GM12878 (cell line): ENCODE measurements at regions of chr4 and their contacts with region 1.

Region 1: GRCh38 chr4:59161249-59161648 is 2038.9 kb upstream of the ADGRL3 start:
- DNase-seq: no peak
- ATAC-seq: peak; percentile 64
- H3K4me3 ChIP-seq: no peak overlapping the region
- H3K27ac ChIP-seq: no peak overlapping the region
- H3K4me1 ChIP-seq: no peaks in the 10 kb centered on the region
- H3K27me3 ChIP-seq: no peaks in the 10 kb centered on the region
- CTCF ChIP-seq: peak; percentile 27 to 42 (median 33); a peak in 3 of 6 replicates
- EP300 ChIP-seq: no peak
- POLR2A ChIP-seq: no peak
- RAD21 ChIP-seq: peak; percentile 47

Region 2: GRCh38 chr4:57426779-57427395 is 1734.4 kb before region 1 on chr4:
- CTCF ChIA-PET with region 1: interaction called, 3 read pairs
- POLR2A ChIA-PET with region 1: no interaction called
- RAD21 ChIA-PET with region 1: no interaction called
- SMC1A ChIA-PET with region 1: no interaction called
- in situ Hi-C with region 1: loop called (anchors 25 kb)
- intact Hi-C with region 1: no loop called
- DNase-seq: no peak
- ATAC-seq: peak; percentile 96
- H3K4me3 ChIP-seq: no peak overlapping the region
- H3K27ac ChIP-seq: no peak overlapping the region
- H3K4me1 ChIP-seq: no peaks in the 10 kb centered on the region
- H3K27me3 ChIP-seq: no peaks in the 10 kb centered on the region
- CTCF ChIP-seq: peak; percentile 74 to 85 (median 74)
- EP300 ChIP-seq: no peak
- POLR2A ChIP-seq: no peak
- RAD21 ChIP-seq: peak; percentile 77

Region 3: GRCh38 chr4:57442831-57443291 is 1718.4 kb before region 1 on chr4:
- CTCF ChIA-PET with region 1: no interaction called
- POLR2A ChIA-PET with region 1: no interaction called
- RAD21 ChIA-PET with region 1: no interaction called
- SMC1A ChIA-PET with region 1: no interaction called
- in situ Hi-C with region 1: loop called (anchors 25 kb)
- intact Hi-C with region 1: loop called (anchors 5 kb)
- DNase-seq: no peak
- ATAC-seq: peak; percentile 58
- H3K4me3 ChIP-seq: no peak overlapping the region
- H3K27ac ChIP-seq: no peak overlapping the region
- H3K4me1 ChIP-seq: no peaks in the 10 kb centered on the region
- H3K27me3 ChIP-seq: no peaks in the 10 kb centered on the region
- CTCF ChIP-seq: peak; percentile 62 to 68 (median 67)
- EP300 ChIP-seq: no peak
- POLR2A ChIP-seq: no peak
- RAD21 ChIP-seq: peak; percentile 78

Region 4: GRCh38 chr4:58732973-58733372 is 428.3 kb before region 1 on chr4:
- CTCF ChIA-PET with region 1: no interaction called
- POLR2A ChIA-PET with region 1: no interaction called
- RAD21 ChIA-PET with region 1: interaction called, 3 read pairs
- SMC1A ChIA-PET with region 1: no interaction called
- in situ Hi-C with region 1: no loop called
- intact Hi-C with region 1: loop called (anchors 1 kb)
- DNase-seq: no peak
- ATAC-seq: peak; percentile 73
- H3K4me3 ChIP-seq: no peak overlapping the region
- H3K27ac ChIP-seq: no peak overlapping the region
- H3K4me1 ChIP-seq: no peaks in the 10 kb centered on the region
- H3K27me3 ChIP-seq: no peaks in the 10 kb centered on the region
- CTCF ChIP-seq: peak in 1 of 3 experiments; percentile 31; a peak in 1 of 6 replicates
- EP300 ChIP-seq: no peak
- POLR2A ChIP-seq: no peak
- RAD21 ChIP-seq: peak; percentile 38

Region 5: DNA sequence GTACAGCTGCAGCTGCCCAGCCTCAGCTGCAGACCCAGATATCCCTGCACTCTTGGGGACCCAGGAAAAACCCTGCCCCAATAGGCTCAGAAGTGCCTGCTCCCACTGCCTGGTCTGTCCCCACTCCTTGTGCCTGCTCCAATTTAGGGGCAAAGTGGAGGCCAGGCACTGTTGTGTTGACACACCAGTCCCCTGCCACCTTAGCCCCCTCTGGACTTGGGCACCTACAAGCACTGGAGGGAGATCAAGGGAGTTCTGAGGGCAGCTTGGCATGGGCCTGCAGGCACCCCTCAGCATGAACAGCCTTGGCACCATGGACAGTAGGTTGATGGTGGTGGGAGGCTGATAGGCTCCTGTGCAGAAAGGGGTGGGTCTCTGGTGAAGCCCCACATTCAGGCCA is 18.1 kb after region 1 on chr4:
- CTCF ChIA-PET with region 1: no interaction called
- POLR2A ChIA-PET with region 1: no interaction called
- RAD21 ChIA-PET with region 1: no interaction called
- SMC1A ChIA-PET with region 1: no interaction called
- in situ Hi-C with region 1: no loop called
- intact Hi-C with region 1: no loop called
- DNase-seq: no peak
- ATAC-seq: no peak
- H3K4me3 ChIP-seq: no peak overlapping the region
- H3K27ac ChIP-seq: no peak overlapping the region
- H3K4me1 ChIP-seq: no peaks in the 10 kb centered on the region
- H3K27me3 ChIP-seq: no peaks in the 10 kb centered on the region
- CTCF ChIP-seq: no peak
- EP300 ChIP-seq: no peak
- POLR2A ChIP-seq: no peak
- RAD21 ChIP-seq: no peak